Dorsolateral prefrontal cortex (tissue), 120 donors: ENCODE measurements at regions of chr14 and their contacts with region 1.

Region 1: DNA sequence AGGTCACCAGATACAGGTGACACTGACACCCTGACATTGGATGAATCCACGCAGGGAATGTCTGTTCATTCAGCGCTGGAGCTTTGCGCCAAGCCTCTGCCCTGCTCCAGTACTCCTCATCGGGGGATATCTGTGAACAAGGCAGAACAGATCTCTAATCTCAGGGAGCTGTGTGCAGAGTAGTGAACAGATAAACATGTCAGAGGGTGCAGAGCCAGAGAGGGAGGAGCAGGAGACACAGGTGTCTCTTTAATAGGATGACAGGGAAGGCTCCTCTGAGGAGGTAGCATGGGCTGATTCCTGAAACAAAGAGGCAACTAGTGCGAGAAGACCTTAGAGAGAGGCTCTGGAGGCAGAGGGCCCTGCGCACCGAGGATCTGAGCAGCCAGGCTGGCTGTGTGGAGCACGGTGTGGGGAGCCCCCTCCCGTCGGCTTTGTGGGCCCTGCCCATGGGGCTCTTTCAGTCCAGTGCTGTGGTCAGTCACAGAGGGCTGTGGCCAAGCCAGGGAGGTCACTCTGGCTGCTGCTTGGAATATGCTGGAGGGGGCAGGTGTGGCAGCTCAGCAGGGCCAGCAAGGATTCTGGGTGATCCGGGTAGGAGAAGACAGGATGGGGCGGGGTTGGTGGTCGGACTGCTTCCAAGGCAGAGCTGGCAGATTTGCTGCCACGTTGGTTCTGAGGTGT is 55.6 kb downstream of the TECPR2 start:
- DNase-seq: peak in 8 of 10 donors; percentile 39 to 72 (median 58)
- H3K4me3 ChIP-seq: peak overlapping the region in 1 of 59 donors; percentile 18
- H3K27ac ChIP-seq: peak overlapping the region; percentile 60 to 100 (median 96)
- H3K27me3 ChIP-seq: no peaks in the 10 kb centered on the region
- CTCF ChIP-seq: peak in 17 of 56 donors; percentile 7 to 48 (median 22)

Region 2: DNA sequence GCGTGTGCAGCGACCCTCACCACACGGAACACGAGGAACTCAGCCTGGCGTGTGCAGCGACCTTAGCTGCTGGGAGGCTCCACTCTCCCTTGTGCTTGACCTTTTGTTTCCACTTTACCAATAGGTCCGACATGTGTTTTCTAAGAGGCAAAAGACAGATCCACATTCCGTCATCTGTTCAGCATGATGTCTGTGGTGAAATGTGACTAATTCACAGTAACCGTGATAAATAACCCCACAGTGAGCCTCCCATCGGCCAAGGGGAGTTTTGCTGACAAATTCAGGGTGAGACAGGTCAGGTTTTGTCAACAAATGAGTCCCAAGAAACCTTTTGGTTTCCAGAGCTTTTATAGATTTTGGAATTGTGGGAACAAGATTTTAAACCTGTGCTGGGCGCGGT is 169.3 kb before region 1 on chr14:
- intact Hi-C with region 1: no loop called
- DNase-seq: no peak
- H3K4me3 ChIP-seq: no peak overlapping the region
- H3K27ac ChIP-seq: no peak overlapping the region
- H3K27me3 ChIP-seq: no peaks in the 10 kb centered on the region
- CTCF ChIP-seq: no peak

Region 3: DNA sequence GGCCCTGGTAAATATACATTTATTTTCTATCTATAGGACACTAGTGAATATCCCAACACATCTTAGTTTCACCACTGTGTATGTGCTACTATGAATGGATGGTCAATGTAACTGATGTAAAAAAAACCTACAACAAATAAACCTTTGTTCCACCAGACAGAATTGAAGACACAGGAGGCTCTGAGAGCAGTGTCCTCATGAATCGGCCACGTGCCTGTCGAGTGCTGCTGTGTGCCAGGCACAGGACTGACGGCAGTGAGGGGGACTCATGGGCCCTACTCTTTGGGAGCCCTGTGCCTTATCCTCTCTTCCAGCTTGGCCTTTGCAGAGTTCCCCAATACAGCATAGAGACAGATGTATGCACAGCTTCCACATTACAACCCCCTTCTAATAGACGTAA is 73.8 kb before region 1 on chr14:
- intact Hi-C with region 1: loop called in 1 of 2 experiments (anchors 5 kb)
- DNase-seq: peak; percentile 15 to 94 (median 87)
- H3K4me3 ChIP-seq: peak overlapping the region in 1 of 59 donors; percentile 3
- H3K27ac ChIP-seq: peak overlapping the region; percentile 80 to 100 (median 98)
- H3K27me3 ChIP-seq: no peaks in the 10 kb centered on the region
- CTCF ChIP-seq: peak in 7 of 56 donors; percentile 2 to 33 (median 13)

Region 4: DNA sequence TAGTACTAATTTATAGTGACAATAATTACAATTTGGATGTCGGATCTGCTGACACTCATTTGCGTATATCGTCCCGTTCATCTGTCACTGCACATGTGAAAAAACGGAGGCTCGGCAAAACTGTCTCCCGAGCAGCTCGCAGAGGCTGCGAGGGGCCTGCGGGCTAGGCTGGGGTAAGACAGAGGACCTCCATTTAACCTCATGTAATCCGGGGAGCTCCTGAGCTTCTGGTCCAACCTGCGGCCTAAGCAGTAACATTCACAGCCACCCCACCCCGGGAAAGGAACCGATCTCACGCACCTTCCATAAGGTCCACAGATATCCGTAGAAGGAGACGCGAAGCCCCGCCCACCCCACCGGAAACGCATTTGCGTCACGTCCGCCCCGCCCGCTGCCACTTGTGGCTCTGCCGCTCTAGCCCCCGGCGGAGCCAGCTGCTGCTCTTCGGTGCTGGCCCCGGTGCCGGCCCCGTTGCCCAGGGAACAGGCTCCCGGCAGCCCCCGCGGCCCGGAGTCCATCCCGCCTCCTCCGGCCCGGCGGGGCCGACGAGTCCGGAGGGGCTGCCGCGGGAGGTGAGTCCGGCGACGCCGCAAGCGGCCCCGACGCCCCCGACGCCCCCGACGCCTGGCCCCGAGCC is 55.6 kb before region 1 on chr14 and contains the starts of genes CINP and TECPR2:
- intact Hi-C with region 1: loop called (anchors 2 to 5 kb)
- DNase-seq: peak; percentile 99 to 100 (median 99)
- H3K4me3 ChIP-seq: peak within 1 kb of the TSS; percentile 66 to 98 (median 88)
- H3K27ac ChIP-seq: peak within 1 kb of the TSS; percentile 72 to 100 (median 98)
- H3K27me3 ChIP-seq: no peaks in the 10 kb centered on the region
- CTCF ChIP-seq: peak in 12 of 56 donors; percentile 7 to 46 (median 18)
- total RNA-seq, gene CINP: 31.4 to 69.6 (median 51.2) TPM
- total RNA-seq, gene TECPR2: 54.3 to 129 (median 78.9) TPM